ENCODE measurements at regions of chr9 and their contacts with region 1.

Region 1: DNA sequence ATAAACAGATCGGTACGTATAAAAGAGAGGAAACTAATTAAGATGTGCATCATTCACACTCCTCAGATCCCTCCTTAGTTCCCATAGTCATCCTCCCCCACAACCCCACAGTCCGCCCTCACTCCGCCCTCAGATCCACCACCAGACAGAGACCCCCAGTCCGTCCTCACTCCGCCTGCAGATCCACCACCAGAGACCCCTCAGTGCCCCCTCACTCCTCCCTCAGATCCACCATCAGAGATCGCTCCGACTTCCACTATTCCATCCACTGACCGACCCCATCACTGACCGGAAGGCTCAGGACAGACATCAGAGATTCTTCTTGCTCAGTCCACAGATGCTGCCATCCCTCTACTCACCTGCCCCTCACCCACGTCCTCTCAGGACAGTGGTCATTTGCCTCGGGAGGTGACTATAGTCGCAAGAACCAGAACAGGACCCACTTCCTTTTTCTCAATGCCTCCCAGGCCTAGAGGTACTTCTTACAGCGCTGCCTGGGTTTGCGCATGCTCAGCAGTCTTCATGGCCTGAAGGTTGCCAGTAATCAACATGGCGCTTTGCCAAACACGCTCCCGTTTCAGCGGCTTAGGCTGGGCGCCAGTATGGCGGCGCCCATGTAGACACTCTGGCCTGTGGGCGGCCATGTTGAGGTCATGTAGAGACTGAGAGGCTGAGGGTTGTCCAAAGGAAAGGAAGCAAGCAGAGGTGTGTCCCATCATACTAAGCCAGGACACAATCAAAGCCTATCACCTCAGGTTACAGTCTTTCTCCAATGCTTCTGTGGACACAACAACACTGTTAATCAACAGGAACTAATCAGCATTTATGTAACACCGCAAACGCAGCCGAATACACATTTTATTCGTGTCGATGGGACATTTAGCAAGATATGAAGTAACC is at the start of gene ZNF484:
- DNase-seq: peak; percentile 94 to 97 (median 95)
- H3K4me3 ChIP-seq: peak within 1 kb of the TSS; percentile 81 to 97
- H3K4me3 Mint-ChIP-seq: peak within 1 kb of the TSS; percentile 87 to 100 (median 99)
- H3K27ac ChIP-seq: peak within 1 kb of the TSS; percentile 94
- H3K27ac Mint-ChIP-seq: peak within 1 kb of the TSS; percentile 96 to 100 (median 99)
- H3K4me1 ChIP-seq: peaks cover 35% of the 10 kb centered on the region
- H3K4me1 Mint-ChIP-seq: peaks cover 30 to 48% (median 40%) of the 10 kb centered on the region in 4 donors
- H3K27me3 ChIP-seq: no peaks in the 10 kb centered on the region
- H3K27me3 Mint-ChIP-seq: no peaks in the 10 kb centered on the region
- total RNA-seq, gene ZNF484: 22.6 to 24.7 TPM

Region 2: GRCh38 chr9:92808726-92809451 is 68.9 kb before region 1 on chr9:
- CTCF ChIA-PET with region 1: no interaction called
- POLR2A ChIA-PET with region 1: no interaction called
- intact Hi-C with region 1: loop called (anchors 5 kb)
- DNase-seq: peak; percentile 39 to 50 (median 47)
- H3K4me3 ChIP-seq: peak overlapping the region in 1 of 2 donors; percentile 47
- H3K4me3 Mint-ChIP-seq: peak overlapping the region; percentile 84 to 98 (median 86)
- H3K27ac ChIP-seq: no peak overlapping the region
- H3K27ac Mint-ChIP-seq: peak overlapping the region in 2 of 7 donors; percentile 43 to 73
- H3K4me1 ChIP-seq: peaks cover 31% of the 10 kb centered on the region
- H3K4me1 Mint-ChIP-seq: peaks cover 6 to 20% (median 13%) of the 10 kb centered on the region in 4 donors
- H3K27me3 ChIP-seq: peaks cover 46% of the 10 kb centered on the region
- H3K27me3 Mint-ChIP-seq: peaks cover 36 to 41% of the 10 kb centered on the region in 2 donors

Region 3: DNA sequence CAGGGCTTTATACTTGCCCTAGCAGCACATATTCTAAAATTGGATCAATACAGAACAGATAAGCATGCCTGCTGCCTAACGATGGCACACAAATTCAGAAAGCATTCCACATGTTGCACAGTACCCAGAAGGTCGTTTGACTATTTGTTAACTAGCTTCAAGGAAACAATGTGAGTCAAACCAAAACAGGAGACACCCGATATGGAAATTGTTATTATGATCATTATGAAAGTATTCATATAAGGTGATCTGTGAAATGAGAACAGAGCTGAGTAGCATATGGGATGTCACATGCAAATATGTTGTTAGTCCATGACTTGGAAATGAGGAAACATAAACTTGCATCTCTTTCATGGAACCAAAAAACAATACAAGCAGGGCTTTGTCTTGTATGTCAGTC is 56.8 kb before region 1 on chr9:
- CTCF ChIA-PET with region 1: no interaction called
- POLR2A ChIA-PET with region 1: no interaction called
- intact Hi-C with region 1: no loop called
- DNase-seq: no peak
- H3K4me3 ChIP-seq: no peak overlapping the region
- H3K4me3 Mint-ChIP-seq: no peak overlapping the region
- H3K27ac ChIP-seq: no peak overlapping the region
- H3K27ac Mint-ChIP-seq: no peak overlapping the region
- H3K4me1 ChIP-seq: no peaks in the 10 kb centered on the region
- H3K4me1 Mint-ChIP-seq: no peaks in the 10 kb centered on the region
- H3K27me3 ChIP-seq: no peaks in the 10 kb centered on the region
- H3K27me3 Mint-ChIP-seq: peaks cover 22 to 28% of the 10 kb centered on the region in 2 donors

Region 4: DNA sequence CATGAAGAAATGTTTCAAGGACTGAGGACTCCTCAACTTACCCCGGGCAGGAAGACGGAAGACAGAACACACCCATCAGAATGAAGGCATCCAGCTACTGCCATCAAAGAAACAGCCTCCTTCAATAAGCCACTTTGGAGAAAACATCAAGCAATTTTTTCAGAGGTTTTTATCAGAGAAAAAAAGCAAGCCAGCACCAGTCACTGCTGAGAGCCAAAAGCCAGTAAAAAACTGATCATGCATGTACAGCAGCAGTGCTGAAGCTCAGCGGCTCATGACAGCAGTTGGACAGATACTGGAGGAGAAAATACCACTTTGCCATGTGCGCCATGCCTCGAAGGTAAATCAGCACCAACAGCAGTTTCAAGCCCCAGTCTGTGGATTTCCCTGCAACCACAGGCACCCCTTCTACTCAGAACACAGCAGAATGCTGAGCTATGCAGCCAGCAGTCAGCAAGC is 10.1 kb after region 1 on chr9:
- CTCF ChIA-PET with region 1: no interaction called
- POLR2A ChIA-PET with region 1: no interaction called
- intact Hi-C with region 1: loop called (anchors 1 kb)
- DNase-seq: peak; percentile 28 to 48 (median 41)
- H3K4me3 ChIP-seq: peak overlapping the region in 1 of 2 donors; percentile 17
- H3K4me3 Mint-ChIP-seq: peak overlapping the region in 7 of 8 donors; percentile 7 to 86 (median 58)
- H3K27ac ChIP-seq: peak overlapping the region; percentile 6
- H3K27ac Mint-ChIP-seq: peak overlapping the region; percentile 73 to 89 (median 85)
- H3K4me1 ChIP-seq: peaks cover 32% of the 10 kb centered on the region
- H3K4me1 Mint-ChIP-seq: peaks cover 35 to 51% (median 45%) of the 10 kb centered on the region in 4 donors
- H3K27me3 ChIP-seq: no peaks in the 10 kb centered on the region
- H3K27me3 Mint-ChIP-seq: peaks cover 0 to 3% of the 10 kb centered on the region in 2 donors